ENCODE measurements at regions of chr17 and their contacts with region 1.

Region 1: DNA sequence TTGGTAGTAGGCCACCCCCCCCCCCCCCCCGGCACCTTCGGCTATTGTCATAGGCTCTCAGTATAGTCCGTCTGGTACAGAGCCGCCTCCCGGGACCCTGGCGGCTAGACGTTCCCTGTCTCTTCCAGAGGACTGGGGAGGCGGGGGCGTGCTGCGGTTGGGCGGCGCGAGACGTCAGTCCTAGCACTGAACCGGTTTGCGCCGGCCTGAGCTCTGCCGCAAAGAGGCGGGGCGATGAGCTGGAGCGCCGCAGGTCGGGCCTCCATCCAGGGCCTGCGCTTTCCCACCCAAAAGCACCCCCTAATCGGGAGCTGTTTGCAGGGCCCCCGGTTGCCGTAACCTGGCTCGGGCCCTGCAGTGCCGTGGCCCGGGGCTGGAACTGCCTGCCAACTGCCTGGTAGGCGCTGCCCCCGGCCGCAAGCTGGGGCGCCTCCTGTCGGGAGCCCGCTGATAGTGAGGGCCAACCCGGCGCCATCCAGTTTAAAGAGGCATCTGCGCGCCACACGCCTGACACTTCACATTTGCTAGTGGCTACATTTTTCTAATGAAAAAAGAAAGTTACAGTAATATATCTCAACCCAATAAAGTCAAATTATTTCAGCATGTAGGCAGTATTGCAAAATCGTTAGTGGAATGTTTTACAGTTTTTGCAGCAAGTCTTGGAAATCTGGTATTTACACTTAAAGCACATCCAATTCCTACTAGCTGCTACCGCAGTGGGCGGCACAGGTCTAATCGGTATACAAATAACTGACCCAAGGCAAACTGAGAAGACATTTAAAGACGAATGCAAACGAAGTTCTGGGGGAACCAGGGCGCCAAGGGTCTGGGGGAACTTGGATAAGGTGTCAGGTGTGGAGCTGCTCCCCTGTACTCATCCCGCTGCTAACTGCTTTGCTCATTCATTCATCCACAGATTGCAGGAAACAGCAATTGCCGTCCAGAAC is 748 bp upstream of the USP22 start:
- DNase-seq: peak; percentile 96
- ATAC-seq: peak; percentile 95
- H3K4me3 ChIP-seq: peak overlapping the region; percentile 63 to 89 (median 81)
- H3K27ac ChIP-seq: peak overlapping the region; percentile 89
- H3K4me1 ChIP-seq: peaks cover 37% of the 10 kb centered on the region
- H3K27me3 ChIP-seq: no peaks in the 10 kb centered on the region; a peak in 1 of 5 replicates
- CTCF ChIP-seq: peak; percentile 88
- EP300 ChIP-seq: no peak
- POLR2A ChIP-seq: peak in 1 of 2 experiments; percentile 73; a peak in 3 of 4 replicates
- RAD21 ChIP-seq: peak; percentile 76; the same call in 1 of the 2 replicates

Region 2: DNA sequence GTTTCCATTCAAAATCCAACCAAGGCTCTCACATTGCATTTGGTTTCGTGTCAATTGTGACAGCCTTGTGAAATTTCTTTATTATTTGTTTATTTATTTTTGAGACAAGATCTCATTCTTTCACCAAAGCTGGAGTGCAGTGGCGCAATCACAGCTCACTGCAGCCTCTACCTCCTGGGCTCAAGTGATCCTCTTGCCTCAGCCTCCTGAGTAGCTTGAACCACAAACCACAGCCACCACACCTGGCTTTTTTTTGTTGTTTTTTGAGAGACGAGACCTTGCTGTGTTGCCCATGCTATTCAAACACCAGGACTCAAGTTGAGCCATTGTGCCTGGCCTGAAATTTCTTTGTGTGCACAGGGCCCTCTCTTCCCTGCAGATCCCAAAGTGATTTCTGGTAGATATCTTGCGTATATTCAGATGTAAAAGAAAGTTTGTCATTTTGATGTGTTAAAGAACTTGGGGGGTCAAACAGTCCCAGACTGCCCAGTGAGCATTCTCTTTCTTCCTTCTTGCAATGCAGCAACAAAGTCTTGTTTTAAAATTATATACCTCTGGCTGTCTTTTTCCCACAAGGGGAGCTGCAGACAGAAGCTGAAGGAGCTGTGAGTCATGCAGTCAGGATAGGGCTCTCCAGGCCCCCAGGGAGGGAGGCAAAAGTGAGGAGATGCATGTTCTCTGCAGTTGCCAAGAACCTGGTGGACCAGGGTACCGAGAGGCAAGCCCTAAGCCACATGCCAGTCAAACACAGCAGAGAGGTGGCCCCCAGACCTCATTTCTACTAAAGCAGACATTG is 14.7 kb after region 1 on chr17:
- CTCF ChIA-PET with region 1: no interaction called
- POLR2A ChIA-PET with region 1: interaction called, 13 read pairs
- in situ Hi-C with region 1: no loop called
- intact Hi-C with region 1: no loop called
- DNase-seq: no peak
- ATAC-seq: no peak
- H3K4me3 ChIP-seq: no peak overlapping the region
- H3K27ac ChIP-seq: no peak overlapping the region
- H3K4me1 ChIP-seq: no peaks in the 10 kb centered on the region
- H3K27me3 ChIP-seq: peaks cover 9 to 28% of the 10 kb centered on the region in 2 experiments; a peak in 3 of 5 replicates
- CTCF ChIP-seq: no peak
- EP300 ChIP-seq: no peak
- POLR2A ChIP-seq: no peak
- RAD21 ChIP-seq: no peak

Region 3: GRCh38 chr17:21078016-21078780 is 34.6 kb after region 1 on chr17:
- CTCF ChIA-PET with region 1: no interaction called
- POLR2A ChIA-PET with region 1: no interaction called
- in situ Hi-C with region 1: no loop called
- intact Hi-C with region 1: no loop called
- DNase-seq: no peak
- ATAC-seq: no peak
- H3K4me3 ChIP-seq: no peak overlapping the region
- H3K27ac ChIP-seq: no peak overlapping the region
- H3K4me1 ChIP-seq: no peaks in the 10 kb centered on the region
- H3K27me3 ChIP-seq: peaks cover 0 to 41% of the 10 kb centered on the region in 2 experiments; a peak in 3 of 5 replicates
- CTCF ChIP-seq: no peak
- EP300 ChIP-seq: no peak
- POLR2A ChIP-seq: no peak
- RAD21 ChIP-seq: no peak

Region 4: GRCh38 chr17:21098934-21099689 is 55.6 kb after region 1 on chr17:
- CTCF ChIA-PET with region 1: no interaction called
- POLR2A ChIA-PET with region 1: interaction called, 4 read pairs
- in situ Hi-C with region 1: no loop called
- intact Hi-C with region 1: loop called (anchors 1 kb)
- DNase-seq: peak; percentile 80
- ATAC-seq: peak; percentile 97
- H3K4me3 ChIP-seq: peak overlapping the region; percentile 55 to 79 (median 65)
- H3K27ac ChIP-seq: peak overlapping the region; percentile 42
- H3K4me1 ChIP-seq: peaks cover 25% of the 10 kb centered on the region
- H3K27me3 ChIP-seq: no peaks in the 10 kb centered on the region
- CTCF ChIP-seq: no peak
- EP300 ChIP-seq: peak in 1 of 2 experiments; percentile 99; a peak in 1 of 4 replicates
- POLR2A ChIP-seq: no peak
- RAD21 ChIP-seq: no peak

Region 5: DNA sequence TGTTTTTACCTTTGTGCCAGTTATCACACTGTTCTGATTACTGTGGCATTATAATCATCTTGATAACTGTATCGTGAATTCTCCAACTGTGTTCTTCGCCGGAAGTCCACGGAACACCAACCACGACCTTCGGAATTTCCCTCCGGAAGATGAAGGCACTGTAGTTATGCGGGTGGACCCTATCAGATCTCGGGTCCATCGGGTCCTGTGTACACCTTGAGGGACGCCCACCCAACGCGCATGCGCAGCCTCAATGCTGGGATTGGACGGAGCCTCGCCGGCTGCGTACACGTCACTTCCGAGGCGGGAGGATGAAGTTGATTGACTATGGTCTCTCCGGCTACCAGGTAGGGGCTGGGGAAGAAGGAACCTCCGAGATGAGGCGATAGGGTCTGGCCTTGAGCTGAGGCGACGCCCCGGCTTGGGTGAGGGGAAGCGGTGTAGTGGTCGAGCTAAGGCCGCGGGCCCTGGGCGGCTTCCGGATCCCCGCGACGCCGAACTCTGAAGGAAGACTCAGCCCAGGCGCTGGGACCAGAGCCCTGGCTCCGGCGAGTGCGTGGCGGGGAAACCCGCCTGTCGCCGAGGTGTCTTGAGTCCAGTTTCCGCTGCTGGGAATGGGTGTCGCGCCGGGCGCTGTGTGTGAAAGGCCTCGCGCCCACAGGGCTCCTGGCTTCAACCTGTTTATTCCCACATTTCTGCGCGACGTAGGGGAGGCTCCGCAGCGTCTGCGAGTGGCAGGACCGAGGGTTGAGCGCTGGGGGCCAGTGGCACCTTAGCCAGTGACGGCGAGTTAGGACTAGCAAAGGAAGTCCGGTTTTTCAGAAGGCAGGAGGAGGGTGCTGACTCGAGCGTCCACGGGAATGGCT is 83.3 kb after region 1 on chr17 and contains the start of gene DHRS7B:
- CTCF ChIA-PET with region 1: no interaction called
- POLR2A ChIA-PET with region 1: interaction called, 8 read pairs
- in situ Hi-C with region 1: no loop called
- intact Hi-C with region 1: loop called (anchors 2 kb)
- DNase-seq: peak; percentile 95
- ATAC-seq: peak; percentile 93
- H3K4me3 ChIP-seq: peak within 1 kb of the TSS; percentile 69 to 92 (median 71)
- H3K27ac ChIP-seq: peak within 1 kb of the TSS; percentile 85
- H3K4me1 ChIP-seq: peaks cover 18% of the 10 kb centered on the region
- H3K27me3 ChIP-seq: no peaks in the 10 kb centered on the region
- CTCF ChIP-seq: 0 out of 2 replicates have a peak, but pooled peaks have one; percentile 24
- EP300 ChIP-seq: no peak
- POLR2A ChIP-seq: peak; percentile 73 to 76
- RAD21 ChIP-seq: 0 out of 2 replicates have a peak, but pooled peaks have one; percentile 22
- total RNA-seq, gene DHRS7B: 24.3 and 35.8 TPM in 2 replicates